ENCODE measurements at regions of chr17 and their contacts with region 1.

Region 1: GRCh38 chr17:68909066-68909465 is 46.1 kb downstream of the ABCA8 start:
- DNase-seq: peak; percentile 4 to 39
- H3K4me3 ChIP-seq: no peak overlapping the region
- H3K27ac ChIP-seq: peak overlapping the region; percentile 22; the same call in 1 of the 2 replicates
- H3K4me1 ChIP-seq: peaks cover 8% of the 10 kb centered on the region
- H3K27me3 ChIP-seq: no peaks in the 10 kb centered on the region
- CTCF ChIP-seq: no peak

Region 2: DNA sequence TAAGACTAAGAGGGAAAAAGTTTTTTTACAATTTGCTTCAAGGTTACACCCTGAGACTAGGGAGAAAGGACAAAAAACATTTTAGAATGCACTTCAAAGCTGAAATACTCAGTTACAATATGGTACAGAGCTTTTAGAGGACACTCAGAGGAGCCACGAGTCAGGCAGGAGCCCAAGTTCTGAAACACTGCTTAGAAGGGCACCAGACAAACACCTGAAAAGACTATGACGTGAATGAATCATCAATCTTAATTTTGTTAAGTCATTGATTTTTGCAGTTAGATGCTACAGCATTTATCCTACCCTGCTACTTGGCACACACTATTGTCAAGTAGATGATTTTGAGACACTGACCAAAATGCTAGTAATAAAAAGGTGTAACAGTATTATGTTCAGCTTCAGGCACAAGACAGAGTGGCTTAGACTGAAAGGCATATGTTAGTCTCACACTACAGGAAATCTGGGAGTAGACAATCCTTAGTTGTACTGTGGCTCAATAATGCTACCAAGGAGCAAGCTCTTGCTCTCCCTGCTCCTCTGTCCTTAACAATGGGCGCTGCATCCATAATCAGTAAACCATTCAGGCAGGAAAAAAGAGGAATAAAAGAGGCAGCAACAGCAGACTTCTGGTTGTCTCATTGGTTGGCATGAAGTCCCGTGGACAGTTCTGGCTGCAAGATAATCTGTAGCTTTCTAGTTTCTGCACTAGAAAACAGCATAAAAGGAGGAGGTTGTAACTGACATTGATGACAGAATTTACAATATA is 105.7 kb before region 1 on chr17:
- CTCF ChIA-PET with region 1: no interaction called
- POLR2A ChIA-PET with region 1: interaction called, 15 read pairs
- intact Hi-C with region 1: no loop called
- DNase-seq: no peak
- H3K4me3 ChIP-seq: no peak overlapping the region
- H3K27ac ChIP-seq: no peak overlapping the region
- H3K4me1 ChIP-seq: peaks cover 4% of the 10 kb centered on the region; the same call in 1 of the 2 replicates
- H3K27me3 ChIP-seq: no peaks in the 10 kb centered on the region
- CTCF ChIP-seq: no peak

Region 3: DNA sequence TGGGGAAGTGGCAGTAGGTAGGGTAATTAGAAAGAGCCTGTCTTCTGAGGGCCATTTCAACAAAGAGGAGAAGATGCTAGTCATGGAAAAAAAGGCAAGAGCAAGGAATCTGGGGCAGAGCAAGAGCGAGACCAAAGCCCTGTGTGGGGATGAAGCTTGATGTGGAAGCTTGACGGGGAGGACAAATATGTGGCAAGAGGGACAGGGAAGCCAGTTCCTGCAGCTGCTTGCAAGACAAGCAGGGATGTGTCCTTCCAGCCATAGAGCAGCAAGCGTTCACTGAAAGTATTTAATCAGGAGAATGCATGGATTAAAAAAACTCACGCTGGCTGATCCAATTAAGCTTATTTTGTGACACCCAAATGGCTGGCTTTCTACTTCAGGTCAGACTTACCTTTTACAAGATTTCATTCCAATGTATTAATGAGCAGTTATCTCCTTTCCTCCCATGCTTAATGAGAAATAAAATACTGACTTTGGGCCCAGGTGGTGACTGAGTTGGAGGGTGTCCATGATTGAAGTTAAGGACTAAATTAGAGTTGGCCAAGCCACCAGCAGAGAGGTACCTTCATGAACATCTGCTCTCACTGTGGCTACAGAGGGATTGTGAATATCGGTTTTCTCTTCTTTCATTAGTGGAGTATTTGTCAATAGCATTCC is 30.7 kb before region 1 on chr17:
- CTCF ChIA-PET with region 1: no interaction called
- POLR2A ChIA-PET with region 1: no interaction called
- intact Hi-C with region 1: no loop called
- DNase-seq: no peak
- H3K4me3 ChIP-seq: no peak overlapping the region
- H3K27ac ChIP-seq: no peak overlapping the region
- H3K4me1 ChIP-seq: no peaks in the 10 kb centered on the region
- H3K27me3 ChIP-seq: no peaks in the 10 kb centered on the region
- CTCF ChIP-seq: no peak

Region 4: DNA sequence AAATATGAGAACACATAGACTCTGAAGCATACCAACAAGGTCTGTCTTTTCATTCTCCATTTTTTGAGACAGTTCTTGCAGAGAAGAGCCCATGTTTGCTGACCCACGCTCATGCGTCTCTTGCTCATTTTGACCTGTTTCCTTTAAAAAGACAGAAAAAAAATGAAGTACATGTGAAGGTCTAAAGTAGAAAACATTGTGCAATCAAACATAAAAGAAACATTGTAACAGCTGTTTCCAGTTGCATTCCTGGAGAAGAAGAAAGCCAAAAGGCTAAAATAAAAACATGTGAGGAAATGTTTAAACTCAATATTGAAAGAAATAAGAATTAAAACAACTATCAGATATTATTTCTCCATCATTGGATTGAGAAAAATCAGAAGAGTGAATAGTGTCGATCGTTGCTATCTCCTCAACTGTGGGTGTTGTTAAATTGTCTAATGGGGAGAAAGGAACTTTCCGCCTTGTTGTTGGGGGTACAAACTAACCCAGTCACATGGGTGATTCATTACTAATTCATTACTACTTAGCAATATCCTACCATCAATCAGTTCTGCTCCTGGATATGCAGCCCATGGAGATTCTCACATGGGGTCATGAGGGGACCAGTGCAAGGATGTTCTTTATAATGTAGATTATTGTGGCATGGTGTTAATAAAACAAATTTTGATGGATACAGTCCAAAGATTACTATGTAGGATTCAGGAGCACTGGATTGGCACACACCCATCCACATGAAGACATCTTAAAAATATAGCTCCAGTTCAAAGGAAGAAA is 142.1 kb after region 1 on chr17:
- CTCF ChIA-PET with region 1: no interaction called
- POLR2A ChIA-PET with region 1: no interaction called
- intact Hi-C with region 1: no loop called
- DNase-seq: no peak
- H3K4me3 ChIP-seq: no peak overlapping the region
- H3K27ac ChIP-seq: no peak overlapping the region
- H3K4me1 ChIP-seq: peaks cover 23% of the 10 kb centered on the region
- H3K27me3 ChIP-seq: no peaks in the 10 kb centered on the region
- CTCF ChIP-seq: no peak

Region 5: DNA sequence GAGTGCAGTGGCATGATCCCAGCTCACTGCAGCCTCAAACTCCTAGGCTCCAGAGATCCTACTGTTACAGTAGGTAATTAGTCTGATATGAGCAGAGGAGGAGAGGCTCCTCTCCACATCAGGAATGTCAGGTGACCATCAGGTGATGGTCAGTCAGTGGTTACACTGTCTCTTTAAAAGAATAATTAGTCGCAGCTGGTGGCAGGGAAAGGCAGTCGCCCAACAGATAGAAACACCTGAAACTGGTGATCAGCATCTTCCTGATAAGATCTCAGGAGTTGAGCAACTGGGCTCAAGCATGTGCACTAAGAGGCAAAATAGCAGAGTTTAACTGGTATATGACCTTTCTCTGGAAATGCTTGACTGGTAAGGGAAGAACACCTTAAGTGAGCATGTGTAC is 439.4 kb after region 1 on chr17:
- CTCF ChIA-PET with region 1: no interaction called
- POLR2A ChIA-PET with region 1: no interaction called
- intact Hi-C with region 1: no loop called
- DNase-seq: peak; percentile 3 to 55
- H3K4me3 ChIP-seq: no peak overlapping the region
- H3K27ac ChIP-seq: no peak overlapping the region
- H3K4me1 ChIP-seq: peaks cover 22% of the 10 kb centered on the region
- H3K27me3 ChIP-seq: no peaks in the 10 kb centered on the region
- CTCF ChIP-seq: no peak